Endothelial cell of umbilical vein (primary cell): ENCODE measurements at regions of chr9 and their contacts with region 1.

Region 1: GRCh38 chr9:88781628-88782391 is 209.5 kb upstream of the S1PR3 start:
- DNase-seq: peak; percentile 70
- H3K4me3 ChIP-seq: no peak overlapping the region
- H3K27ac ChIP-seq: peak overlapping the region; percentile 28
- H3K4me1 ChIP-seq: peaks cover 31% of the 10 kb centered on the region
- H3K27me3 ChIP-seq: no peaks in the 10 kb centered on the region
- CTCF ChIP-seq: peak; percentile 50 to 71
- POLR2A ChIP-seq: no peak

Region 2: DNA sequence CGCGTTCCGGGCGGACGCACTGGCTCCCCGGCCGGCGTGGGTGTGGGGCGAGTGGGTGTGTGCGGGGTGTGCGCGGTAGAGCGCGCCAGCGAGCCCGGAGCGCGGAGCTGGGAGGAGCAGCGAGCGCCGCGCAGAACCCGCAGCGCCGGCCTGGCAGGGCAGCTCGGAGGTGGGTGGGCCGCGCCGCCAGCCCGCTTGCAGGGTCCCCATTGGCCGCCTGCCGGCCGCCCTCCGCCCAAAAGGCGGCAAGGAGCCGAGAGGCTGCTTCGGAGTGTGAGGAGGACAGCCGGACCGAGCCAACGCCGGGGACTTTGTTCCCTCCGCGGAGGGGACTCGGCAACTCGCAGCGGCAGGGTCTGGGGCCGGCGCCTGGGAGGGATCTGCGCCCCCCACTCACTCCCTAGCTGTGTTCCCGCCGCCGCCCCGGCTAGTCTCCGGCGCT is 1284.2 kb before region 1 on chr9 and contains the start of gene DAPK1:
- CTCF ChIA-PET with region 1: no interaction called
- POLR2A ChIA-PET with region 1: no interaction called
- dilution Hi-C with region 1: no loop called
- intact Hi-C with region 1: loop called (anchors 10 kb)
- DNase-seq: peak; percentile 84
- H3K4me3 ChIP-seq: peak within 1 kb of the TSS; percentile 72 to 93 (median 77)
- H3K27ac ChIP-seq: peak within 1 kb of the TSS; percentile 78
- H3K4me1 ChIP-seq: peaks cover 35% of the 10 kb centered on the region
- H3K27me3 ChIP-seq: no peaks in the 10 kb centered on the region
- CTCF ChIP-seq: peak; percentile 9 to 42
- POLR2A ChIP-seq: peak; percentile 71
- total RNA-seq, gene DAPK1: 93.4 and 119 TPM in 2 replicates

Region 3: GRCh38 chr9:88733651-88734421 is 48.0 kb before region 1 on chr9:
- CTCF ChIA-PET with region 1: interaction called, 5 read pairs
- POLR2A ChIA-PET with region 1: interaction called, 4 read pairs
- dilution Hi-C with region 1: no loop called
- intact Hi-C with region 1: loop called (anchors 1 kb)
- DNase-seq: peak; percentile 57
- H3K4me3 ChIP-seq: no peak overlapping the region
- H3K27ac ChIP-seq: peak overlapping the region; percentile 48
- H3K4me1 ChIP-seq: peaks cover 29% of the 10 kb centered on the region
- H3K27me3 ChIP-seq: no peaks in the 10 kb centered on the region
- CTCF ChIP-seq: no peak
- POLR2A ChIP-seq: no peak

Region 4: DNA sequence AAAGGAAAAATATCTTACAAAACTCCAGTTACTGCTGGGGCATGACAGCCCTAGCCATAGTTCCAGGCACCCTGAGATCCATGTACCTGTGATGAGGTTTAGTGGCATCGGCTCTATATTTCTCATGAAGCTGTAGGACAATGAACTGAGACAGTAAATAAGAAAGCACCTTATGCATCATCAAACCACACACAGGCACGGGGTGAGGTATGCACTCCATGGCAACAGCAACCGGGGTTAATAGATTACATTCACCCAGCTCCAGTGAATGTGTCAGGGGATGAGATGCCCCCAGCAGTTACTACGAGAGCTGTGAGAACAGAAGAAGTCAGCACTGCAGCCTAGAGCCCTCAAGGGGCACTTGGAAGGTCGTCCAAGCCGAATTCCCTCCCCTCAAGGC is 47.5 kb after region 1 on chr9:
- CTCF ChIA-PET with region 1: no interaction called
- POLR2A ChIA-PET with region 1: no interaction called
- dilution Hi-C with region 1: no loop called
- intact Hi-C with region 1: loop called (anchors 2 kb)
- DNase-seq: no peak
- H3K4me3 ChIP-seq: no peak overlapping the region
- H3K27ac ChIP-seq: no peak overlapping the region
- H3K4me1 ChIP-seq: peaks cover 6% of the 10 kb centered on the region
- H3K27me3 ChIP-seq: no peaks in the 10 kb centered on the region
- CTCF ChIP-seq: no peak
- POLR2A ChIP-seq: no peak

Region 5: GRCh38 chr9:88991066-88992034 is 209.5 kb after region 1 on chr9 and contains the start of gene S1PR3:
- CTCF ChIA-PET with region 1: interaction called, 24 read pairs
- POLR2A ChIA-PET with region 1: no interaction called
- dilution Hi-C with region 1: no loop called
- intact Hi-C with region 1: loop called (anchors 1 kb)
- DNase-seq: peak; percentile 45
- H3K4me3 ChIP-seq: peak within 1 kb of the TSS; percentile 52 to 99 (median 96)
- H3K27ac ChIP-seq: peak within 1 kb of the TSS; percentile 58
- H3K4me1 ChIP-seq: peaks cover 37% of the 10 kb centered on the region
- H3K27me3 ChIP-seq: no peaks in the 10 kb centered on the region
- CTCF ChIP-seq: peak; percentile 5 to 9
- POLR2A ChIP-seq: peak; percentile 41
- total RNA-seq, gene S1PR3: 18.9 and 25.8 TPM in 2 replicates

Region 6: DNA sequence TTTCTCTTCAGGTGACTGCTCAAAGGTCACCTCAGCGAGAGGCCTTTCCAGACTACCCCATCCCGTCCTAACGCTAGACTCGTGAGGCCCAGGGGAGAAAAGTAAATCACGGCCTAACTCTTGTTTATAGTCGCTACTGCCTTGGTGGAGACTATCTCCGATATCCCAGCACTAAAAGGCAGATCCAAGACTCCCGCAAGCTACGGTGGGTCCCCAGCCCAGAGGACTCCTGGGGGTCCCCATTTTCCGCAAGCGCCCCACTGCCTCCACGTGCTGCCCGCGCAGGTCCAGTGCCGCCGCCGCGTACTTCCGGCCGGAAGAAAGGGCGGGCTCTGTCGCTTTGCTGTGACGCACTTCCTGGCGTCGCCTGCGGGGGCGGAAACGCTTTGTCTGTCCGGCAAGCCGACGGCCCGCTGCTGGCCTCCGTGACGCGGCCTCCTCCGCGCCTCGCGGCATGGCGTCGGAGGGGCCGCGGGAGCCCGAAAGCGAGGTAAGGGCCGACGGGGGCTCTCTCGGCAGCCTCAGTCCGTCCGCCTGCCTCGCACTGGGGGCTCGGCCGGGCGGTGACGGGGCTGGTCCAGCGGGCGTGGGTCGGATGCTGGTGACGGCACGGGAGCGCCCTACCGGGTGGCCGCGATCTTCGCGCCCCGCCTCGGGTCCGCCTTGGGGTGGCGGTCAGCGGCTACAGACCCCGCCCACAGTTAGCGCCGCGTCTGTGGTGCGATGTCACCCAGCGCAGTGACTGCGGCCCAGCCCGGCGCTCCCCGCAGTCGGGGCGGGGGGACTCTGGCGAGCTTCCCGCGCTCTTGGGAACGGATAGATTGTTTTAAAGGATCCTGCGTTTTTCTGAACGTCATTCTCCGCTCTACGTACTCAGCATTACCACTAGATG is 536.6 kb after region 1 on chr9 and contains the start of gene SECISBP2:
- CTCF ChIA-PET with region 1: no interaction called
- POLR2A ChIA-PET with region 1: no interaction called
- dilution Hi-C with region 1: no loop called
- intact Hi-C with region 1: loop called (anchors 2 kb)
- DNase-seq: peak; percentile 98
- H3K4me3 ChIP-seq: peak within 1 kb of the TSS; percentile 58 to 94 (median 84)
- H3K27ac ChIP-seq: peak within 1 kb of the TSS; percentile 100
- H3K4me1 ChIP-seq: peaks cover 36% of the 10 kb centered on the region
- H3K27me3 ChIP-seq: no peaks in the 10 kb centered on the region
- CTCF ChIP-seq: peak; percentile 68 to 78
- POLR2A ChIP-seq: peak; percentile 97
- total RNA-seq, gene SECISBP2: 34.1 and 36.3 TPM in 2 replicates